Activated T-helper 2 cell treated with anti-CD3 and anti-CD28 coated beads, Interferon-gamma antibody, Interleukin-2, Interleukin-4, amounts not matched to agents 10 μg/mL and 5 μg/mL and 100 μg/mL, durations not matched to agents 14 hours and 24 hours and 36 hours (primary cell): ENCODE measurements at regions of chr5 and their contacts with region 1.

Region 1: GRCh38 chr5:40688127-40688761 is 8.5 kb downstream of the PTGER4 start:
- DNase-seq: peak; percentile 76
- H3K4me3 Mint-ChIP-seq: peak overlapping the region; percentile 76
- H3K27ac Mint-ChIP-seq: peak overlapping the region; percentile 73
- H3K4me1 Mint-ChIP-seq: peaks cover 70% of the 10 kb centered on the region
- H3K27me3 Mint-ChIP-seq: no peaks in the 10 kb centered on the region

Region 2: GRCh38 chr5:39578887-39579497 is 1109.3 kb before region 1 on chr5:
- intact Hi-C with region 1: loop called (anchors 5 kb)
- DNase-seq: no peak
- H3K4me3 Mint-ChIP-seq: no peak overlapping the region
- H3K27ac Mint-ChIP-seq: no peak overlapping the region
- H3K4me1 Mint-ChIP-seq: peaks cover 2% of the 10 kb centered on the region
- H3K27me3 Mint-ChIP-seq: peaks cover 20% of the 10 kb centered on the region

Region 3: DNA sequence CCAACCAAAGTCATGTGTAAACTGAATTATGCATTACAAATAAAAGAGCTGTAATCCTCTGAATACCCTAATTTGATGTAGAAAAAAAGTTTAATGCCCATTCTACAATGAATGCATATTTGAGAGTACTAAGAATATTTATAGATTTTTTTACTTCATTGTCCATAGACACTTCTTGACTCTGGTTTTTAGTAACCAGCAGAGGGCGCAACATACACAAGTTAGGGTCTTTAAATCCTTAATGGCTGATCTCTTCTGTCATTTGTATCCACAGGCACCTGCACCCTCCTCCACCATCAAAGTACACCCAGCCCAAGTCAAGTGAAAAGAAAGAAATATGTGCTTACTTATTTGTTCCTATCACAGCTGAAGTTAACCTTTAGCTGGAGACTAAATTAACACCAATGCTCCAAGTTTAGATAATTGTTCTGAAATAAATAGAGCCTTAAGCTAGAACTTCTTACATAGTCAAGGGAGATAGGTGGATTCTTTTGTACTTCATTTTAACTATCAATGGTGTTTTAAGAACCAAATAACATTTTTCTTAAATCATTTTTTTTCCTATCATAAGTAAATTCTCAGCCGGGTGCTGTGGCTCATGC is 739.3 kb before region 1 on chr5:
- intact Hi-C with region 1: loop called (anchors 1 kb)
- DNase-seq: peak; percentile 33
- H3K4me3 Mint-ChIP-seq: no peak overlapping the region
- H3K27ac Mint-ChIP-seq: no peak overlapping the region
- H3K4me1 Mint-ChIP-seq: peaks cover 3% of the 10 kb centered on the region
- H3K27me3 Mint-ChIP-seq: no peaks in the 10 kb centered on the region

Region 4: GRCh38 chr5:40093550-40093949 is 594.7 kb before region 1 on chr5:
- intact Hi-C with region 1: no loop called
- DNase-seq: no peak
- H3K4me3 Mint-ChIP-seq: no peak overlapping the region
- H3K27ac Mint-ChIP-seq: no peak overlapping the region
- H3K4me1 Mint-ChIP-seq: no peaks in the 10 kb centered on the region
- H3K27me3 Mint-ChIP-seq: no peaks in the 10 kb centered on the region

Region 5: GRCh38 chr5:40165794-40166728 is 522.2 kb before region 1 on chr5:
- intact Hi-C with region 1: loop called (anchors 2 kb)
- DNase-seq: no peak
- H3K4me3 Mint-ChIP-seq: no peak overlapping the region
- H3K27ac Mint-ChIP-seq: no peak overlapping the region
- H3K4me1 Mint-ChIP-seq: peaks cover 10% of the 10 kb centered on the region
- H3K27me3 Mint-ChIP-seq: no peaks in the 10 kb centered on the region

Region 6: GRCh38 chr5:40333459-40334244 is 354.6 kb before region 1 on chr5:
- intact Hi-C with region 1: loop called (anchors 2 kb)
- DNase-seq: no peak
- H3K4me3 Mint-ChIP-seq: no peak overlapping the region
- H3K27ac Mint-ChIP-seq: peak overlapping the region; percentile 43
- H3K4me1 Mint-ChIP-seq: peaks cover 43% of the 10 kb centered on the region
- H3K27me3 Mint-ChIP-seq: no peaks in the 10 kb centered on the region

Region 7: GRCh38 chr5:40486437-40487275 is 201.6 kb before region 1 on chr5:
- intact Hi-C with region 1: loop called (anchors 1 kb)
- DNase-seq: peak; percentile 64
- H3K4me3 Mint-ChIP-seq: peak overlapping the region; percentile 19
- H3K27ac Mint-ChIP-seq: peak overlapping the region; percentile 75
- H3K4me1 Mint-ChIP-seq: peaks cover 78% of the 10 kb centered on the region
- H3K27me3 Mint-ChIP-seq: no peaks in the 10 kb centered on the region

Region 8: DNA sequence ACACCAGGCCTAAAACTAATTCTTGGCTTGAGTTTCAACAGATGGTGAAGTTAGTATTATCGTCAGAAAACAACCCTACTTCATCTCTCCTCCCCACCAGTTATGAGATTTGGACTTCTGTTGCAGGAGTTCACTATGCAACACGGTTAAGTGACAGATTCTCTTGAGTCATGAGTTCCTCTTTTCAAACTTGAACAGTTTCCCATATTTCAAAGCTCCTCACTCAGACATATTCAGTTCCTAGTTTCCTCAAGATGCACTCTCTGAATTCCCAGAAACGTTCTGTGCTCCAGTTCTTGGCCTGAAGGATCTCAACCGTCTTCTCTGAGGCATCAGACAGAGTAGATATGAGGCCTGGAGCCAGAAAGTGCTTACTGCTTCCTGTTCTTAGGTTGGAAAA is 15.8 kb before region 1 on chr5:
- intact Hi-C with region 1: no loop called
- DNase-seq: no peak
- H3K4me3 Mint-ChIP-seq: no peak overlapping the region
- H3K27ac Mint-ChIP-seq: no peak overlapping the region
- H3K4me1 Mint-ChIP-seq: peaks cover 74% of the 10 kb centered on the region
- H3K27me3 Mint-ChIP-seq: peaks cover 2% of the 10 kb centered on the region